ENCODE measurements at regions of chr20 and their contacts with region 1.

Region 1: DNA sequence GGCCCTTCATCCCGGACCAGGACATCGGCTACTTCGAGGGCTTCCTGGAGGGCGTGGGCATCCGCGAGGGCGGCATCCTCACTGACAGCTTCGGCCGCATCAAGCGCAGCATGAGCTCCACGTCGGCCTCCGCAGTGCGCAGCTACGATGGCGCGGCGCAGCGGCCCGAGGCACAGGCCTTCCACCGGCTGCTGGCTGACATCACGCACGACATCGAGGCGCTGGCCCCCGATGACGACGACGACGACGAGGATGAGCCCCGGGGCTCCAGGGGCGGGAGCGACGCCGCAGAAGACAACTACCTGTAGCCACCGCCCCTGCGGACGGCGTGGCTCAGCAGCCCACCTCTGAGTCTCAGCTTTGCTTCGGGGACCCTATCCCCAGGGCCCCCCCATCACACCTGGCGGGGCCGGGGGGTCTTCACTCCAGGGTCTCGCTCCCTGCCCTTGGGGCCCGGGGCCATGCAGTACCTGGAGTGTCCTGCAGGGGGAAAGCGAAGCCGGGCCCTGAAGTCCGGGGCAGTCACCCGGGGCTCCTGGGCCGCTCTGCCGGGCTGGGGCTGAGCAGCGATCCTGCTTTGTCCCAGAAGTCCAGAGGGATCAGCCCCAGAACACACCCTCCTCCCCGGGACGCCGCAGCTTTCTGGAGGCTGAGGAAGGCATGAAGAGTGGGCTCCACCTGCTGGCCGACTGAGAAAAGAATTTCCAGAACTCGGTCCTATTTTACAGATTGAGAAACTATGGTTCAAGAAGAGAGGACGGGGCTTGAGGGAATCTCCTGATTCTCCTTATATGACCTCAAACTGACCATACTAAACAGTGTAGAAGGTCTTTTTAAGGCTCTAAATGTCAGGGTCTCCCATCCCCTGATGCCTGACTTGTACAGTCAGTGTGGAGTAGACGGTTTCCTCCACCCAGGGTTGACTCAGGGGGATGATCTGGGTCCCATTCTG is 20.8 kb upstream of the HCK start:
- DNase-seq: peak; percentile 39
- H3K4me3 ChIP-seq: peak overlapping the region; percentile 25; the same call in 1 of the 2 replicates
- H3K27ac ChIP-seq: no peak overlapping the region
- H3K27me3 ChIP-seq: peaks cover 77% of the 10 kb centered on the region
- CTCF ChIP-seq: peak; percentile 92

Region 2: GRCh38 chr20:31822421-31823330 is 208.6 kb before region 1 on chr20:
- CTCF ChIA-PET with region 1: interaction called, 73 read pairs
- POLR2A ChIA-PET with region 1: no interaction called
- DNase-seq: no peak
- H3K4me3 ChIP-seq: peak overlapping the region; percentile 13; the same call in 1 of the 2 replicates
- H3K27ac ChIP-seq: no peak overlapping the region
- H3K27me3 ChIP-seq: peaks cover 2% of the 10 kb centered on the region
- CTCF ChIP-seq: peak; percentile 94

Region 3: GRCh38 chr20:31845300-31845863 is 185.9 kb before region 1 on chr20 and contains the start of gene FOXS1:
- CTCF ChIA-PET with region 1: interaction called, 10 read pairs
- POLR2A ChIA-PET with region 1: no interaction called
- DNase-seq: no peak
- H3K4me3 ChIP-seq: no peak within 1 kb of the TSS
- H3K27ac ChIP-seq: no peak within 1 kb of the TSS
- H3K27me3 ChIP-seq: peaks cover 33% of the 10 kb centered on the region
- CTCF ChIP-seq: no peak
- polyA plus RNA-seq, gene FOXS1: not detected in 2 replicates

Region 4: GRCh38 chr20:31856516-31856915 is 174.8 kb before region 1 on chr20:
- CTCF ChIA-PET with region 1: interaction called, 70 read pairs
- POLR2A ChIA-PET with region 1: no interaction called
- DNase-seq: no peak
- H3K4me3 ChIP-seq: no peak overlapping the region
- H3K27ac ChIP-seq: no peak overlapping the region
- H3K27me3 ChIP-seq: peaks cover 52% of the 10 kb centered on the region
- CTCF ChIP-seq: no peak

Region 5: GRCh38 chr20:32012159-32012688 is 19.1 kb before region 1 on chr20:
- CTCF ChIA-PET with region 1: interaction called, 11 read pairs
- POLR2A ChIA-PET with region 1: no interaction called
- DNase-seq: no peak
- H3K4me3 ChIP-seq: no peak overlapping the region
- H3K27ac ChIP-seq: no peak overlapping the region
- H3K27me3 ChIP-seq: peaks cover 23% of the 10 kb centered on the region
- CTCF ChIP-seq: no peak

Region 6: DNA sequence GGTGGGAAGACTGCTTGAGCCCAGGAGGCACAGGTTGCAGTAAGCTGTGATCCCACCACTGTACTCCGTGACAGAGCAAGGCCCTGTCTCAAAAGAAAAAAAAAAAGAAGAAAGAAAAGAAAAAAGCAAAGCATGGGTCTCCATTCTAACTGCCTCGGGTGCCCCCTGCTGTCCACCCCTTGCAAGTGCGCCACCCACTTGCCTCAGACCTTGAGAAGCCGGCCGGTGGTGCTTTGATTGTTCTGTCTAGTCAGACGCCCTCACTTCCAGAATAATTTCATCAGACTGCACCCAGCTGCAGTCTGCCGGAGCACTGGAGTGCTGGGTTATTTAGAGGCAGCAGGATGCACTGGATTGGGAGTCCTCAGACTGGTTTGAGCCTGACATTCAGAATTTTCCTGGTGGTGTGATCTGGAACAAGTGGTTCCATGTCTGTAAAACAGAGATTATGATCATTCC is 60.6 kb after region 1 on chr20:
- CTCF ChIA-PET with region 1: interaction called, 37 read pairs
- POLR2A ChIA-PET with region 1: no interaction called
- DNase-seq: peak; percentile 47
- H3K4me3 ChIP-seq: no peak overlapping the region
- H3K27ac ChIP-seq: no peak overlapping the region
- H3K27me3 ChIP-seq: peaks cover 42% of the 10 kb centered on the region
- CTCF ChIP-seq: peak; percentile 94

Region 7: DNA sequence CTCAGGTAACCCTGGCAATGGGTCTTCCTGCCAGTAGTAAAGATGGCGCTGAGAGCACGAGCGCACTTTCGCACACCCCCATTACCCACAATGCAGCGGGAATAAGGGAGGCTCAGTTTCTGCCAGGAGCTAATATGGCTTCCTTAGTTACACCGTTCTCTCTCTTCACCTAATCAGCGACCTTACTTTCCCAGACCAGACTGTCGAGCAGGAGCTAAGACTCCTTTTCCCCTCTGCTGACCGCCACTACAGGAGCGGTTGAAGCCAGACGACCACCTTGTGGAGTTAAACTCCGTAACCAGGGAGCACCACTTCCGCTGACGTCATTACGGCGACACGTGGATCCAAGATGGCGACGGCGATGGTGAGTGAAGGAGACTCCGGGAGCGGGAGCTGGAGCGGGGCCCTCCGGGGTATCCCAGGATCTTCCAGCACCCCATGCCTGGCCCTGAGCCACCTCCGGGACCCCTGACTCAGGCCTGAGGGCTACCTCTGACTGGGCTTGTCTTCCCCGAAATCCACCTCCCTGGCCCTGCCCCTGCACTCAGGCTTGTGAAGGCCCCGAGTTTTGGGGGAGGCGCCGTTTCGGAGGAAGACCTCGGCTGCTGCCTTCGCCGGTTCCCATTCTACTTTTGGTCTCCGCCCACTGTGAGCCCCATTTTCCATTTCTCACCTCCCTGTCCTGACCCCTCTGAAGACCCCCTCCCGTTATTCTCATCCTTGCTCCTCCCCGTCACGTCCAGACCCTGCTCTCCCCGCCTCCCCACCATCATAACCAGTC is 78.3 kb after region 1 on chr20 and contains the start of gene TM9SF4:
- CTCF ChIA-PET with region 1: no interaction called
- POLR2A ChIA-PET with region 1: no interaction called
- DNase-seq: peak; percentile 87
- H3K4me3 ChIP-seq: peak within 1 kb of the TSS; percentile 92
- H3K27ac ChIP-seq: peak within 1 kb of the TSS; percentile 100
- H3K27me3 ChIP-seq: peaks cover 4% of the 10 kb centered on the region
- CTCF ChIP-seq: no peak
- polyA plus RNA-seq, gene TM9SF4: 75.6 and 83.9 TPM in 2 replicates

Region 8: GRCh38 chr20:32227744-32228688 is 196.7 kb after region 1 on chr20:
- CTCF ChIA-PET with region 1: no interaction called
- POLR2A ChIA-PET with region 1: no interaction called
- DNase-seq: no peak
- H3K4me3 ChIP-seq: no peak overlapping the region
- H3K27ac ChIP-seq: no peak overlapping the region
- H3K27me3 ChIP-seq: no peaks in the 10 kb centered on the region
- CTCF ChIP-seq: no peak

Region 9: GRCh38 chr20:32263398-32263954 is 232.2 kb after region 1 on chr20:
- CTCF ChIA-PET with region 1: no interaction called
- POLR2A ChIA-PET with region 1: no interaction called
- DNase-seq: no peak
- H3K4me3 ChIP-seq: no peak overlapping the region
- H3K27ac ChIP-seq: no peak overlapping the region
- H3K27me3 ChIP-seq: no peaks in the 10 kb centered on the region
- CTCF ChIP-seq: no peak